Heart right ventricle (tissue), 16 donors: ENCODE measurements at regions of chr7 and their contacts with region 1.

Region 1: DNA sequence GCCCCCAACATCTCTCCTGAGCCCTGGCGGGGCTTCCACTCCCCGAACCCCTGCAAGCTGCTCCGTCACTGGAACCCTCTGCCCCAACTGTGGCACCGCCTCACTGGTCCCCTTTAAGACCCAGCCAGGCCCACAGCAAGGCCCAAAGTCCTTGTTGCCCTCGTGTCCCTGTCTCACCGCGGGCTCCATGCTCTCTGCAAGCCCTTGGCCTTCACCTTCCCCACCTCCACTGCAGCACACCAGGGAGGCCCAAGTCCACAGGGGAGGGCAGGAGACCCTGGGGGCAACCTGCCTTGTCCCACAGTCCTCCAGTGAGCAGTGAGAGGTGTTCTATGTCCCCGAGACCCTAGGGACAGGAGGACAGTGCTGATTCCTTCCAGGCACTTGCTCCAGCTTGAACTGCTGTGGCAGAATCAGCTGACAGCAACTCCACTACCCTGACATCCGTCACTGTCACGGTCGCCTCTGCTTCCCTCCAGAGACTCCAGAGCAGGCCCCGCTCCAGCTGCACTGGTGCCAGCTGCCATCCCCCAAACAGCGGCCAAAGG is 105.3 kb downstream of the CYTH3 start:
- DNase-seq: peak; percentile 58 to 60
- ATAC-seq: peak in 7 of 8 donors; percentile 51 to 71 (median 67)
- H3K4me3 ChIP-seq: no peak overlapping the region
- H3K27ac ChIP-seq: peak overlapping the region; percentile 22 to 78 (median 58)
- H3K4me1 ChIP-seq: peaks cover 20 to 79% (median 40%) of the 10 kb centered on the region in 9 donors
- H3K27me3 ChIP-seq: no peaks in the 10 kb centered on the region
- CTCF ChIP-seq: no peak

Region 2: DNA sequence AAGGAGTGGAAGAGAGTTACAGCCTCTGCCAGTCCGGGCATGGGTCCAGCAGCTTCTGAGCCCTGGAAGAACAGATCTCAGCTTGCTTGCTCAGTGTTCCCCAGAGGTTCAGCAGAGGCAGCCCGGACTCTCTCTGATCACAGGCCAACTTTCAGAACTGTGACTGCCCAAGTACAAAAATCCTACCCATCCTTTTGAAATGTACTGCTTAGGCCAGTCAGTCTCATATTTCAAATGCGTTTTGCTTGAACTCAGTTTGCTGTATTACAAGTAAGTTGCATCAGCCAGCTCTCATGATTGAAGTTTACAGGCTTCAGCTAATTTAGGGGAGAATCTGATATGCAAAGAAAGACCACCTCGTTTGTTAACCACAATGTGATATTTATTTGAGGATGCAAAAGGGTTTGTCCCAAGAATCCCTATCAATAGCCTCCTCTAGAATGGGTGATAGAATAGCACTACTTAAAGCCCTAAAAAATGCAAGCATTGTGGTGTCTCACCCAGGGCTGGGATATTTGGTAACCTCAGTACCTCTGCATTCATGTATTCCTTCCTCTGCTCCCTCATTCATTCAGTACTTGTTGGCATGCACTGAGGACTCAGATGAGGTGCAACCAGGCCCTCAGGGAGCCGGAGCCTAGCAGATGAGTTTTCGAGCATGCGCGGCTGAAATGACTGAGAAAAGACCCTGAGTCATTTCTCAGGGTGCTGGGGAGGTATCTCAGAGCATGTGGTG is 151.0 kb before region 1 on chr7:
- intact Hi-C with region 1: no loop called
- DNase-seq: peak; percentile 55 to 76
- ATAC-seq: peak in 7 of 8 donors; percentile 11 to 86 (median 82)
- H3K4me3 ChIP-seq: no peak overlapping the region
- H3K27ac ChIP-seq: peak overlapping the region in 6 of 10 donors; percentile 12 to 67 (median 44)
- H3K4me1 ChIP-seq: peaks cover 0 to 42% (median 20%) of the 10 kb centered on the region in 9 donors
- H3K27me3 ChIP-seq: no peaks in the 10 kb centered on the region
- CTCF ChIP-seq: no peak

Region 3: GRCh38 chr7:6130007-6130587 is 37.0 kb before region 1 on chr7:
- intact Hi-C with region 1: no loop called
- DNase-seq: no peak
- ATAC-seq: peak in 1 of 8 donors; percentile 47
- H3K4me3 ChIP-seq: no peak overlapping the region
- H3K27ac ChIP-seq: no peak overlapping the region
- H3K4me1 ChIP-seq: no peaks in the 10 kb centered on the region
- H3K27me3 ChIP-seq: no peaks in the 10 kb centered on the region
- CTCF ChIP-seq: no peak

Region 4: GRCh38 chr7:6202117-6202516 is 35.0 kb after region 1 on chr7:
- intact Hi-C with region 1: loop called in 1 of 10 experiments (anchors 5 kb)
- DNase-seq: peak in 1 of 2 donors; percentile 27
- ATAC-seq: peak in 5 of 8 donors; percentile 6 to 55 (median 32)
- H3K4me3 ChIP-seq: no peak overlapping the region
- H3K27ac ChIP-seq: peak overlapping the region in 1 of 10 donors; percentile 38
- H3K4me1 ChIP-seq: peaks cover 4 to 84% (median 54%) of the 10 kb centered on the region in 9 donors
- H3K27me3 ChIP-seq: no peaks in the 10 kb centered on the region
- CTCF ChIP-seq: no peak